ENCODE measurements at regions of chr17 and their contacts with region 1.

Region 1: DNA sequence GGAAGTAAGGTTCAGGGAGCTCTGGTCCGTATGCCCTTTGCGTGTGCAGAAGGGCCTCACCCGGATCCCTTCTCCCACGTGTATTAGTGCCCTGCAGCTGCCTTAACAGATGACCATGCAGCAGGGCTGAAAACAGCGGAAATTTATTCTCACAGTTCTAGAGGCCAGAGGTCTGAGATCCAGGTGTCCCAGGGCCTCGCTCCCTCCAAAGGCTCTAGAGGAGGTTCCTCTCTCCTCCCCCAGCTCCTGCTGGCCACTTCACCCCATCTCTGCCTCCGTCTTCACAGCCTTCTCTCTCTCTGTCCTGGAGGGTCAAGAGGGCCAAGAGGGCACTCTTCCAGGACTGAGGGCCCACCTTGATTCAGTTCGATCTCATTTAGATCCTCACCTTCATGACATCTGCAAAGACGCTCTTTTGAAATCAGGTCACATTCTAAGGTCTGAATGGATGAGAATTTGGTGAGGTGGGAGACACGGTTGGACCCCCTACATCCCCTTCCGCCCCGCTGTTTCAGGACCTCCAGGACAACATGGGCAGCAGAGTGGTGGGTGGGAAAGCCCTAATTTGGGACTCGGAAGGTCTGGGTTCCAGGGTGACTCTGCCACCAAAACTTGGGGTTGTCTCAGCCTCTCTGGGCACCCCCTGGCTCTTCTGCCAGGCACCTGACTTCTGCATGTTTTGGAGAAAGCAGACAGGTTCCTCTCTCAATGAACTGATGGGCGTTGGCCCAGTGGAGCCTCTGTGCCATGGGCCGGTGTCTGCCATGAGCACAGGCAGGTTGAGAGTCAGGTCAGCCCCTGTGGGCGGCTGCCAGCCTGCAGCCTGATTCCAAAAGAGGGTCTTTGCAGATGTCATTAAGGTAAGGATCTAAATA is 361.2 kb downstream of the SEC14L1 start:
- DNase-seq: no peak
- H3K4me3 ChIP-seq: no peak overlapping the region
- H3K27me3 ChIP-seq: no peaks in the 10 kb centered on the region
- CTCF ChIP-seq: no peak

Region 2: DNA sequence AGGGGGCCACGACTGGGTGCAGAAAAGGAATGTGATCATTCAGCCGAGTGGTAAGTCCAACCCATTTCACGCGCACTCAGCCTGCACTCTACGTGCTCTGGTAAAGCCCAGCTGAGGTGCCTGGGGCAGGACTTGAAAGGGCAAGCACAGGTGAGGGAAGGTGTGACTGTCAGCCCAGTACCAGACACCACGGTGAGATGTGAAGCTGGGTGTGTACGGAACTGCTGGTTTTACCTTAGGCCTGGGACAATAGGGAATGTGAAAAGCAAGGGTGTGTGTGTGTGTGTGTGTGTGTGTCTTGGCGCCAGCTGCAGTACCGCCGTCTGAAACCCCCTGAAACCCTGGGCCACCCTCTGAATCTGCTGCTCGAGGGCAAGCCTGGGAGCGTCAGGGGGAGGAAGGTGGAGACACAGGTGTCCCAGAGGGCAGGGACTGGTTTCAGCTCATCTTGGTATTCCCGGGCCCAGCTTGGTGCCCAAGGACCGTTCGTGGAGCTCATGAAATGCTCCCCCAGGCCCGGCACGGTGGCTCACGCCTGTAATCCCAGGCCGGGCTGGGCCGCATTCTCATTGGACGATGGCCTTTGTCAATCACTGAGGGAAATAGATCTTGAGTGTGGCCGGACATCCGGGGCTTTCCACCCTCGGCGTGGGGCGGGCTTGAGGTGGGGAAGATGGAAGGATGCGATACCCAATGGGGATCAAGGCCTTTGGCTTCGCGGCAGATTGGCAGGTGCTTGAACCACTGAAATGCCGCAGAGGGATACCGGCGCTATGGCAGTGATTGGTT is 830.7 kb before region 1 on chr17:
- CTCF ChIA-PET with region 1: no interaction called
- POLR2A ChIA-PET with region 1: interaction called, 10 read pairs
- DNase-seq: peak; percentile 98
- H3K4me3 ChIP-seq: peak overlapping the region; percentile 57
- H3K27me3 ChIP-seq: no peaks in the 10 kb centered on the region
- CTCF ChIP-seq: no peak

Region 3: DNA sequence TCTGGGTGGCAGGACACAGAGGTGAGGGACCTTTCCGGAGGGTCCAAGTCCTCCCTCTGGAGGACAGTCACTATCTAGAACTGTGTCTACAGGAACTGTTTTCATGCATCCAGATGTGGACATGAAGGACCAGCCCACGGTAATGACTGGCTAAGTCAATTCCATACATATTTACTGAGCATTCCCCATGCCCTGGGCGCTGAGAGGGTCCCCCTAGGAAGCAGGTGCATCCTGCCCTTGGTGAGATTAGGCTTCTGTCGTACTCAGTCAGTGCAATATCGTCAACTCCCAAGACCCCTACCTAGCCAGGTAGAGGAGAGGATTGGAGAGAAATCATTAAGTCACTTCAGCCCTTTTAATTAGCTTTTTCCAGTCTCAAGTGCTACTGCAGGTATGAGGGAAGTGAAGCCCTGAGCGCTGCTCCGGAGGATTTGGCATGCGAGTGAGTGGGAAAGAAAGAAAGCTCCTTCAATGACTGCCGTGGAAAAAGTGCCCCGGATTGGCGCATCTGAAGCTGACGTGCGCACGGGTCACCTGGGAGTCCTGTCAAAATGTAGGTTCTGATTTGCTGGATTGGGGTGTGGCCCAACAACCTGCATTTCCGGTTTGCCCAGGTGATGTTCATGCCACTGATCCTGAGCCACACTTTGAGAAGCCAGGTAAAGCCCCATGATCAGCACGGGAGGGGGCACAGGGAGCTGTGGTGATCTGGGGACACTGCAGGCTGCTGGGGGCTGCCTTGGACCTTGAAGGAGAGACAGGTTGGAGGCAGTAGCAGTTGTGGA is 89.2 kb after region 1 on chr17:
- CTCF ChIA-PET with region 1: no interaction called
- POLR2A ChIA-PET with region 1: no interaction called
- DNase-seq: no peak
- H3K4me3 ChIP-seq: no peak overlapping the region
- H3K27me3 ChIP-seq: peaks cover 16% of the 10 kb centered on the region
- CTCF ChIP-seq: no peak

Region 4: GRCh38 chr17:77619851-77620250 is 117.9 kb after region 1 on chr17:
- CTCF ChIA-PET with region 1: no interaction called
- POLR2A ChIA-PET with region 1: interaction called, 15 read pairs
- DNase-seq: peak; percentile 42
- H3K4me3 ChIP-seq: no peak overlapping the region
- H3K27me3 ChIP-seq: no peaks in the 10 kb centered on the region
- CTCF ChIP-seq: no peak